ENCODE measurements at regions of chr4 and their contacts with region 1.

Region 1: DNA sequence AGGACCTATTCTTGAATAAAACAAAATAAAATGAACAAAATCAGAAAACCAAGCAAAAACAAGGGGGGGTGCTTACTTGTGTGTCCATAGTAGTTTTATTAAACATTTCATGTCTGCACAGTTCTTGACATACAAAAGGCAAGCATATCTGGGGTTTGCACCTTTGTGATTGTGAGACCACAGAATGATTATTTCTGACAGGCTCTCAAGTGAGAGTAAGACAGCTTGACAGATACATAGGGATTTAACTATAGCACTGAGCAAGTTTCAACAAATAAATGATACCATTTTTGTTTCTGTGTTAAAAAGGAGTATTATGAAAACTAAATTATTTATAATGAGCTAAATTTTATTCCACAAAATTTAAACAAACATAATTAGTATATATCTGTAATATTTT is 712.0 kb upstream of the PCDH10 start:
- DNase-seq: no peak
- ATAC-seq: no peak
- H3K4me3 ChIP-seq: no peak overlapping the region
- H3K4me3 Mint-ChIP-seq: no peak overlapping the region
- H3K27ac ChIP-seq: no peak overlapping the region
- H3K27ac Mint-ChIP-seq: no peak overlapping the region
- H3K4me1 ChIP-seq: no peaks in the 10 kb centered on the region
- H3K4me1 Mint-ChIP-seq: no peaks in the 10 kb centered on the region
- H3K27me3 ChIP-seq: no peaks in the 10 kb centered on the region
- H3K27me3 Mint-ChIP-seq: no peaks in the 10 kb centered on the region

Region 2: GRCh38 chr4:133537780-133538281 is 1100.7 kb after region 1 on chr4:
- CTCF ChIA-PET with region 1: no interaction called
- POLR2A ChIA-PET with region 1: interaction called in 1 of 2 experiments, 10 read pairs
- DNase-seq: no peak
- ATAC-seq: no peak
- H3K4me3 ChIP-seq: no peak overlapping the region
- H3K4me3 Mint-ChIP-seq: no peak overlapping the region
- H3K27ac ChIP-seq: no peak overlapping the region
- H3K27ac Mint-ChIP-seq: no peak overlapping the region
- H3K4me1 ChIP-seq: no peaks in the 10 kb centered on the region
- H3K4me1 Mint-ChIP-seq: no peaks in the 10 kb centered on the region
- H3K27me3 ChIP-seq: no peaks in the 10 kb centered on the region
- H3K27me3 Mint-ChIP-seq: no peaks in the 10 kb centered on the region

Measured in T-cell (primary cell).